ENCODE measurements at regions of chr12 and their contacts with region 1.

Region 1: GRCh38 chr12:91349476-91349875 is 166.9 kb upstream of the DCN start:
- DNase-seq: no peak
- H3K4me3 ChIP-seq: no peak overlapping the region
- H3K27ac ChIP-seq: peak overlapping the region in 1 of 2 donors; percentile 26
- H3K4me1 ChIP-seq: no peaks in the 10 kb centered on the region
- H3K27me3 ChIP-seq: no peaks in the 10 kb centered on the region
- CTCF ChIP-seq: no peak
- EP300 ChIP-seq: no peak
- POLR2A ChIP-seq: no peak

Region 2: GRCh38 chr12:90987520-90987919 is 362.0 kb before region 1 on chr12:
- intact Hi-C with region 1: loop called in 1 of 4 experiments (anchors 10 kb)
- DNase-seq: no peak
- H3K4me3 ChIP-seq: no peak overlapping the region
- H3K27ac ChIP-seq: no peak overlapping the region
- H3K4me1 ChIP-seq: no peaks in the 10 kb centered on the region
- H3K27me3 ChIP-seq: no peaks in the 10 kb centered on the region
- CTCF ChIP-seq: no peak
- EP300 ChIP-seq: no peak
- POLR2A ChIP-seq: no peak

Measured in ovary (tissue), 10 donors.